ENCODE measurements at regions of chr7 and their contacts with region 1.

Region 1: GRCh38 chr7:30057741-30058140 is 29.5 kb downstream of the PLEKHA8 start:
- DNase-seq: no peak

Region 2: GRCh38 chr7:29946428-29947186 is 111.1 kb before region 1 on chr7:
- intact Hi-C with region 1: loop called in 1 of 2 experiments (anchors 10 kb)
- DNase-seq: no peak

Region 3: GRCh38 chr7:30080818-30081217 is 23.1 kb after region 1 on chr7:
- intact Hi-C with region 1: no loop called
- DNase-seq: no peak